Right ventricle myocardium inferior (tissue), 1 donor: ENCODE measurements at regions of chr15 and their contacts with region 1.

Region 1: GRCh38 chr15:77821188-77821958 is 188.7 kb upstream of the LINGO1 start:
- DNase-seq: peak; percentile 70
- ATAC-seq: peak; percentile 72

Region 2: DNA sequence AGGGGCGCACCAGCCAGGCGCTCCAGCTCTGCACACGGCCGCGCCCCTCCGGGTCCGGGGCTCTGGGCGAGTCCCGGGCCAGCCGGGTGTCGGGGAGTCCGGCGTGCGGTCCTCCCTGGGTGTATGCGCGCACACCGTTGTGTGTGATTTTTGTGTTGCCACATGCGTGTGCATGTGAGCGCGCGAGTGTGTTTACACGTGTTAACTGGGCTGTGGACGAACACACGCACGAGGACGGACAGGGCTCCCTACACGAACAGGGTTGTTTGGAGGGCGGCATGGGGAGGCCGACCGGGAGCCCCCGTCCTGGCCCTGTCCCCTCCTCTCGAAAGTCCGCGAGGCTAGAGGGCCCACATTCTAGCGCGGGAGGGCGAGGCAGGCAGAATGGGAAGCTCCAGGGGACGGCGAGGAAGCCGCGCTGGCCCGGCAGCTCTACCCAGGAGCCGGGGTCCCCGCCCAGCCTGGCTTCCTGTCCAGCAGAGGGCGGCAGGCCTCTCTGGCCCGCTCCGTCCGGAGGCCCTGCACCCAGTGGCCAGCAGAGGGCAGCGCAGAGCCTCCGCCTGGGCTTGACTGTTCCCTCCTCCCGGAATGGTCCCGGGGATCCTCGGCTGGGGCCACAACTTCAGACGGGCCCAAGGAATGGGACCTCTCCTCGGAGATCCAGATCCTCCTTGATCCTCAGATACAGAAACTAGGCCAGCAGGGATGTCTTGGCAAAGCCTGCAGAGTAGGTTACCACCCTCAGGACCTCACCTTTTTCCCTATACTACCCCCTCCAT is 188.1 kb before region 1 on chr15:
- intact Hi-C with region 1: loop called (anchors 1 kb)
- DNase-seq: peak; percentile 94
- ATAC-seq: peak; percentile 96

Region 3: GRCh38 chr15:77738441-77739302 is 82.7 kb before region 1 on chr15:
- intact Hi-C with region 1: no loop called
- DNase-seq: no peak
- ATAC-seq: no peak

Region 4: GRCh38 chr15:77944002-77944867 is 122.9 kb after region 1 on chr15:
- intact Hi-C with region 1: no loop called
- DNase-seq: peak; percentile 93
- ATAC-seq: peak; percentile 95